Heart left ventricle (tissue), 16 donors: ENCODE measurements at regions of chr12 and their contacts with region 1.

Region 1: GRCh38 chr12:55681142-55682077 is 26.3 kb downstream of the ITGA7 start:
- DNase-seq: peak in 4 of 5 donors; percentile 64 to 78 (median 72)
- ATAC-seq: peak; percentile 76 to 88 (median 78)
- H3K4me3 ChIP-seq: peak overlapping the region; percentile 14 to 51 (median 38)
- H3K27ac ChIP-seq: peak overlapping the region; percentile 38 to 79 (median 62)
- H3K4me1 ChIP-seq: peaks cover 0 to 26% (median 7%) of the 10 kb centered on the region in 12 donors
- H3K27me3 ChIP-seq: no peaks in the 10 kb centered on the region
- CTCF ChIP-seq: peak in 10 of 12 donors; percentile 11 to 53 (median 32)
- POLR2A ChIP-seq: peak in 1 of 2 donors; percentile 22

Region 2: DNA sequence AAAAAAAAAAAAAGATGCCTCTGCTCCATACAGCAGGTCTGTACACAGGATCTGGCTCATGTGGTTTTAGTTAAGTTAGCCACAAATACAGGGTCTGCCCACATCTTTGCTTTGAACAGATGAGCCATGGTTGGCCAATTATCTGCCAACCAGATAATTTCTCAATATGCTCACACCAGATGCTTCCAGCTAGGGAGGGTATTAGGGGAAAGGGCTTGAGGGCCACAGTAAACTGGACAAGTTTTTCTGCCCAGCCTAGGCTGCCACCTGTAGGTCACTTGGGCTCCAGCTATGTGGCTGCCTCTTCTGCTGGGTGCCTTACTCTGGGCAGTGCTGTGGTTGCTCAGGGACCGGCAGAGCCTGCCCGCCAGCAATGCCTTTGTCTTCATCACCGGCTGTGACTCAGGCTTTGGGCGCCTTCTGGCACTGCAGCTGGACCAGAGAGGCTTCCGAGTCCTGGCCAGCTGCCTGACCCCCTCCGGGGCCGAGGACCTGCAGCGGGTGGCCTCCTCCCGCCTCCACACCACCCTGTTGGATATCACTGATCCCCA is 39.6 kb after region 1 on chr12:
- intact Hi-C with region 1: loop called in 8 of 10 experiments (anchors 1 to 5 kb)
- DNase-seq: peak; percentile 54 to 88 (median 77)
- ATAC-seq: peak; percentile 44 to 67 (median 62)
- H3K4me3 ChIP-seq: peak overlapping the region in 1 of 12 donors; percentile 15
- H3K27ac ChIP-seq: peak overlapping the region; percentile 22 to 99 (median 93)
- H3K4me1 ChIP-seq: peaks cover 4 to 90% (median 79%) of the 10 kb centered on the region in 12 donors
- H3K27me3 ChIP-seq: no peaks in the 10 kb centered on the region
- CTCF ChIP-seq: peak; percentile 42 to 77 (median 59)
- POLR2A ChIP-seq: peak in 1 of 2 donors; percentile 19

Region 3: GRCh38 chr12:55728939-55729823 is 47.8 kb after region 1 on chr12 and contains the start of gene CD63:
- intact Hi-C with region 1: loop called in 5 of 10 experiments (anchors 2 to 5 kb)
- DNase-seq: peak; percentile 94 to 96 (median 94)
- ATAC-seq: peak; percentile 78 to 89 (median 85)
- H3K4me3 ChIP-seq: peak within 1 kb of the TSS; percentile 64 to 96 (median 86)
- H3K27ac ChIP-seq: peak within 1 kb of the TSS; percentile 97 to 100 (median 99)
- H3K4me1 ChIP-seq: peaks cover 10 to 56% (median 45%) of the 10 kb centered on the region in 12 donors
- H3K27me3 ChIP-seq: no peaks in the 10 kb centered on the region
- CTCF ChIP-seq: no peak
- POLR2A ChIP-seq: peak in 1 of 2 donors; percentile 86
- total RNA-seq, gene CD63: 475 to 1,670 (median 767) TPM

Region 4: DNA sequence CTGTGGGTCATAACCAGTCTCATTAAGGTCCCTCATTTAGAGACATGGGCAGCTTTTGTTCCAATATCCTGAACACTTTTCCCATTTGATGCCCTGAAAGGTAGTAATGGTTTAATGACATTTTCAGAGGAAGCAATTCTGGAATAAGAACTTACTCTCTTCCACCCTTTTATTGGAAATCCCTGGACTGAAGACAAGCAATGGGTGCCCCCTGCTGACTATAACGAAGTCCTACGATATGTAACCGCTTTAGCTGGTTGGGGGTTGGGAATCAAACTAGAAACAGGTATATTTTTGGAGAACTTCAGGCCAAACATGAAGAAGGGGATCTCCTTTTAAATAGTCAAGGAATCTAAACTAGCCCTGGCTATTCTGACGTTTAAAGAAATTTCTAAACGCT is 115.7 kb after region 1 on chr12:
- intact Hi-C with region 1: no loop called
- DNase-seq: peak in 1 of 5 donors; percentile 18
- ATAC-seq: peak in 2 of 4 donors; percentile 52 to 60
- H3K4me3 ChIP-seq: no peak overlapping the region
- H3K27ac ChIP-seq: no peak overlapping the region
- H3K4me1 ChIP-seq: peaks cover 0 to 7% (median 0%) of the 10 kb centered on the region in 12 donors
- H3K27me3 ChIP-seq: no peaks in the 10 kb centered on the region
- CTCF ChIP-seq: peak in 11 of 12 donors; percentile 29 to 65 (median 47)
- POLR2A ChIP-seq: no peak